CD8-positive, alpha-beta T cell (primary cell): ENCODE measurements at regions of chr5 and their contacts with region 1.

Region 1: GRCh38 chr5:131263648-131264450 is at the start of gene CDC42SE2:
- DNase-seq: peak; percentile 77 to 96 (median 86)
- ATAC-seq: peak; percentile 83
- H3K4me3 ChIP-seq: peak within 1 kb of the TSS; percentile 93 to 98
- H3K4me3 Mint-ChIP-seq: peak within 1 kb of the TSS; percentile 87
- H3K27ac ChIP-seq: peak within 1 kb of the TSS; percentile 90 to 93
- H3K27ac Mint-ChIP-seq: peak within 1 kb of the TSS; percentile 95
- H3K4me1 ChIP-seq: peaks cover 42% of the 10 kb centered on the region
- H3K4me1 Mint-ChIP-seq: peaks cover 56% of the 10 kb centered on the region
- H3K27me3 ChIP-seq: no peaks in the 10 kb centered on the region
- H3K27me3 Mint-ChIP-seq: no peaks in the 10 kb centered on the region
- CTCF ChIP-seq: no peak
- total RNA-seq, gene CDC42SE2: 340 to 348 TPM

Region 2: GRCh38 chr5:131165119-131165727 is 98.6 kb before region 1 on chr5 and contains the start of gene HINT1:
- CTCF ChIA-PET with region 1: interaction called, 8 read pairs
- POLR2A ChIA-PET with region 1: interaction called, 21 read pairs
- intact Hi-C with region 1: loop called in 1 of 2 experiments (anchors 1 kb)
- DNase-seq: peak; percentile 81 to 96 (median 93)
- ATAC-seq: peak; percentile 83
- H3K4me3 ChIP-seq: peak within 1 kb of the TSS; percentile 85 to 90
- H3K4me3 Mint-ChIP-seq: peak within 1 kb of the TSS; percentile 95
- H3K27ac ChIP-seq: peak within 1 kb of the TSS; percentile 85 to 91
- H3K27ac Mint-ChIP-seq: peak within 1 kb of the TSS; percentile 98
- H3K4me1 ChIP-seq: peaks cover 40% of the 10 kb centered on the region
- H3K4me1 Mint-ChIP-seq: peaks cover 49% of the 10 kb centered on the region
- H3K27me3 ChIP-seq: no peaks in the 10 kb centered on the region
- H3K27me3 Mint-ChIP-seq: no peaks in the 10 kb centered on the region
- CTCF ChIP-seq: no peak
- total RNA-seq, gene HINT1: 243 to 252 TPM

Region 3: DNA sequence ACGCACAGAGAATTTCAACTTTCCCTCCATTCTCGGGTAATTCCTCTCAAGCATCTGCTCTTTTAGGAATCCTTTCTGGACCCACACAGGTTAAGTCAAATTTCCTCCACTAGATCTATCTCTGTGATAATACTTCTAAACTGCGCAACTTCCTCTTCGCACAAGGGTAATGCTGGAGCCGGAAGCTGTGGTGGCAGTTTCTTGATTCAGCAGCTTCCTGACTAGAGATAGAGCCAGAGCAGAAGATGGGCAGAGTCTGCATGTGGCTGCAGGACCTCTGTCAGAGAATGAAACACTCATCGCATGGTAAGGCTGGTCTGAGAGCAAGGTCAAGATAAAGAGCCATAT is 11.1 kb before region 1 on chr5:
- CTCF ChIA-PET with region 1: interaction called, 43 read pairs
- POLR2A ChIA-PET with region 1: interaction called, 130 read pairs
- intact Hi-C with region 1: loop called in 1 of 2 experiments (anchors 1 kb)
- DNase-seq: peak; percentile 63 to 95 (median 82)
- ATAC-seq: peak; percentile 75
- H3K4me3 ChIP-seq: peak overlapping the region; percentile 41 to 53
- H3K4me3 Mint-ChIP-seq: peak overlapping the region; percentile 94
- H3K27ac ChIP-seq: peak overlapping the region; percentile 55 to 89
- H3K27ac Mint-ChIP-seq: peak overlapping the region; percentile 95
- H3K4me1 ChIP-seq: peaks cover 60% of the 10 kb centered on the region
- H3K4me1 Mint-ChIP-seq: peaks cover 73% of the 10 kb centered on the region
- H3K27me3 ChIP-seq: no peaks in the 10 kb centered on the region
- H3K27me3 Mint-ChIP-seq: no peaks in the 10 kb centered on the region
- CTCF ChIP-seq: no peak

Region 4: DNA sequence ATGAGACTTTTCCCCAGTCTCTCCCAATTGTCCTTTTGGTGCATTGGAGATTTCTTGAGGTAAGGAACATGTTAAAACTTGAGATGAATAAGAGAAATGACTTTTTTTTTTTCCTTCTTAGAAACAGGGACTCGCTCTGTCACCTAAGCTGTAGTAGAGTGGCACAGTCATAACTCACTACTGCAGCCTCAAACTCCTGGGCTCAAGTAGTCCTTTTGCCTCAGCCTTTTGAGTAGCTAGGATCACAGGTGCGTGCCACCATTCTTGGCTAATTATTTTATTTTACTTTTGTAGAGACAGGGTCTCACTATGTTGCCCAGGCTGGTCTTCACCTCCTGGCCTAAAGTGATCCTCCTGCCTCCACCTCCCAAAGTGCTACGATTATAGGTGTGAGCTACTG is 25.9 kb after region 1 on chr5:
- CTCF ChIA-PET with region 1: interaction called, 12 read pairs
- POLR2A ChIA-PET with region 1: interaction called, 239 read pairs
- intact Hi-C with region 1: no loop called
- DNase-seq: peak in 2 of 9 experiments; percentile 34 to 57
- ATAC-seq: peak; percentile 52
- H3K4me3 ChIP-seq: peak overlapping the region; percentile 4 to 42
- H3K4me3 Mint-ChIP-seq: peak overlapping the region; percentile 76
- H3K27ac ChIP-seq: peak overlapping the region; percentile 21 to 79
- H3K27ac Mint-ChIP-seq: peak overlapping the region; percentile 91
- H3K4me1 ChIP-seq: peaks cover 87% of the 10 kb centered on the region
- H3K4me1 Mint-ChIP-seq: peaks cover 72% of the 10 kb centered on the region
- H3K27me3 ChIP-seq: no peaks in the 10 kb centered on the region
- H3K27me3 Mint-ChIP-seq: no peaks in the 10 kb centered on the region
- CTCF ChIP-seq: no peak

Region 5: GRCh38 chr5:131316026-131316425 is 52.2 kb after region 1 on chr5:
- CTCF ChIA-PET with region 1: interaction called, 3 read pairs
- POLR2A ChIA-PET with region 1: interaction called, 5 read pairs
- intact Hi-C with region 1: loop called in 1 of 2 experiments (anchors 2 kb)
- DNase-seq: no peak
- ATAC-seq: no peak
- H3K4me3 ChIP-seq: no peak overlapping the region
- H3K4me3 Mint-ChIP-seq: no peak overlapping the region
- H3K27ac ChIP-seq: peak overlapping the region in 1 of 2 experiments; percentile 53
- H3K27ac Mint-ChIP-seq: peak overlapping the region; percentile 39
- H3K4me1 ChIP-seq: peaks cover 48% of the 10 kb centered on the region
- H3K4me1 Mint-ChIP-seq: peaks cover 78% of the 10 kb centered on the region
- H3K27me3 ChIP-seq: no peaks in the 10 kb centered on the region
- H3K27me3 Mint-ChIP-seq: no peaks in the 10 kb centered on the region
- CTCF ChIP-seq: no peak